HEK293 (cell line): ENCODE measurements at regions of chr2 and their contacts with region 1.

Region 1: GRCh38 chr2:230824406-230824978 is 40.2 kb upstream of the ITM2C start:
- H3K4me3 ChIP-seq: no peak overlapping the region
- H3K27ac ChIP-seq: no peak overlapping the region
- H3K4me1 ChIP-seq: no peaks in the 10 kb centered on the region
- CTCF ChIP-seq: peak; percentile 73

Region 2: DNA sequence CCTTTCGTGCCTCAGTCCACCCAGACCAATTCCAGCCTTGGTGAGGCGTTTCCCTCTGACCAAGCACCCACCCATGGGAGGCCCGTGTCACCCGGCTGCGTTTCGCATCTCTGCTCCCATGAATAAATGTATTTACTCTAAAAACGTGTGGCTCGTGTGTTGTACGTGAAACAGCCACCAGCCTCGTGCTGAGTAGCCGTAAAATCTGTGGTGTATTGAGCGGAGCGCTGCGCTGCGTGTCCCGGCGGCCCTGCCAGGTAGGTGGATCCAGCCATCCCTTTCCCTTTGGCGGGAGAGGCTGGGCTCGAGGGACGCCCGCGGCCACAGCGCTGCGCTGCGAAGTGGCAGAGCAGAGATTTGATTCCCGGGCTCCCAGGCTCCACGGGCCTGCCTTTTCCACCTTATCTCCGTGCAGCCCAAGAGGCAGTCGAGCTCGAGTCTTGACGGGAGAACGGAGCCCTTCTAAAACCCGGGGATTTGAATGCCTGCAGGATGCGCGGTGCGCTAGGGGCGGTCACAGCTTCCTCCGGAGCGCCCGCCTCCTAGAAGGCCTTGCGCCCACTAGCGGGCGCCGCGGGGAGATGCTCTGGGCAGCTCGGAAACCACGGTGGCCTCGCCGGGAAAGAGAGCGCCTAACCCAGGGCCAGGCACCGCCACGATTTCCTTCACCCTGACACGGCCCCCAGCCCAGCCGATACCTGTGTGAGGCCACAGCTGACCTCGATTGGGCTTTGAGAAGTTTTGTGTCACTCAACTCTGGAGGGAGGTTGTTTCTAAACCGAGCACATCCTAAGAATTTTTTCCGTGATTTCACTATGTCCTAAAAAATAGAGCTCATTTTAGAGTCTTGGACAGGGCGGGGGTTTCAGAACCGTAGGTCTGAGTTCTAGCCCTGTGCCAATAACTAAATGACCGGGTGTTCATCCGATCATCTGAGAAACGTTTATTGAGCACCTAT is 228.3 kb after region 1 on chr2:
- CTCF ChIA-PET with region 1: interaction called, 12 read pairs
- POLR2A ChIA-PET with region 1: interaction called, 3 read pairs
- H3K4me3 ChIP-seq: peak overlapping the region; percentile 46
- H3K27ac ChIP-seq: no peak overlapping the region; the same call in 1 of the 2 replicates
- H3K4me1 ChIP-seq: no peaks in the 10 kb centered on the region
- CTCF ChIP-seq: peak; percentile 94

Region 3: DNA sequence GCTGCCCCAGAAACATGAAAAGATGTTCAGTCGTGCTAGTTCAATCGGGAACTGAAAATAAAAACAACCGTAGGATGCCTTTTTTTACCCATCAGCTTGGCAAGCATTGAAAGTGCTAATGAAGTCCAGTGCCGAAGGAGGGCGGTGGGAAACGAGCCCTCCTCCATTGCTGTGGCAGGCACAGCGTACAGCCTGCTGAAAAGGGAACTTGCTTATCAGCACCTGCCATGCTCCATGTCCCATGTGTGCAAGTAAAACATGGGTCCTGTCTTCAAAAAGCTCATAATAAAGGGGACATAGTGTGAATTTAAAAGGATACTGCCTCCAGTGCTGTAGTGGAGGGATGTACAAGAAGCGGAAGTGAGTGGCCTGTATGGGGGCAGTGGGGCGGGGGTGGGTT is 456.4 kb after region 1 on chr2:
- CTCF ChIA-PET with region 1: no interaction called
- POLR2A ChIA-PET with region 1: no interaction called
- H3K4me3 ChIP-seq: no peak overlapping the region
- H3K27ac ChIP-seq: no peak overlapping the region
- H3K4me1 ChIP-seq: no peaks in the 10 kb centered on the region
- CTCF ChIP-seq: no peak